ENCODE measurements at regions of chr3 and their contacts with region 1.

Region 1: GRCh38 chr3:51719410-51720025 is 12.7 kb downstream of the GRM2 start:
- DNase-seq: peak; percentile 24
- CTCF ChIP-seq: no peak

Region 2: DNA sequence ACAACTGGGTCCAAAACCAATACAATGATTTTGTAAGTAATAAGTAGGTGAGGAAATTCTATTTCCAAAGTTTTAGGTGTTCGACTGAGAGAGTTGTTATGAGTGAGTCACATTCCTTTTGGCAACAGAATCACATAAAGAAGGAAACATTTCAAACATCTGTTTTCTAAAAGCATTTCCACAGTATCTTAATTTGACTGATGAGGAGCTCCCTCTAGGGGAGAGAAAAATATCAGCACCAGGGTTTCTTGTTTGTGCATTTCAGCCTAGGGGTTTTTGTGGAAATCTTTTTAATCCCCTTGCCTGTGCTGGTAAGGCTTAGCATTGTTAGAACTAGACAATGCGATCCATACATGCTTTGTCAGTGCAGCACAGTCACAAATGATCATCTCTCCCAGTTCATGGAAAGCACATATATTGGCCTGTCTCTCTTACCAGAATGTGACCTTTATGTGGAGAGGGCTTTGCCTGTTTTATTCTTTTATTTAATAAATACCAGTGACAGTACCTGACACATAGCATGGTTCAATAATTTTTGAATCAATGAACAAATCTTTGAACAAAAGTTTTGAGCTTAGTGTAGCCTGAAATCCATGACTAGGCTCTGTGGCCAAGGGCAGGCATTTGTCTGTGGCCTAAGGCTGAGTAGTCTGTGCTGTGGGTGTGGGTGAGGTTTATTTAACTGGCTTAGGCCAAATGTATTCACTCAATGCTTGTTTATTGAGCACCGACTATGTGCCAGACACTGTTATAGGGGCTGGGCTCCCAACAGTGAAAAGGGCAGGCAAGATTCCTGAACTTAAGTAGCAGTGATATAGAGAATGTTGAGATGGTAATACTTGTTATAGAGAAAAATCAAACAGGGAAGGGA is 80.6 kb after region 1 on chr3:
- in situ Hi-C with region 1: loop called (anchors 10 kb)
- DNase-seq: peak; percentile 48
- CTCF ChIP-seq: peak; percentile 35

Region 3: GRCh38 chr3:51955893-51956770 is 236.6 kb after region 1 on chr3:
- in situ Hi-C with region 1: no loop called
- DNase-seq: peak; percentile 58
- CTCF ChIP-seq: no peak